Activated T-helper 1 cell treated with anti-CD3 and anti-CD28 coated beads, Interleukin-12 subunit alpha, Interleukin-12 subunit beta, Interleukin-2, Interleukin-4 antibody, amounts not matched to agents 30 ng/mL and 10 ng/mL and 1 ng/mL, durations not matched to agents 14 hours and 24 hours and 36 hours (primary cell): ENCODE measurements at regions of chr7 and their contacts with region 1.

Region 1: DNA sequence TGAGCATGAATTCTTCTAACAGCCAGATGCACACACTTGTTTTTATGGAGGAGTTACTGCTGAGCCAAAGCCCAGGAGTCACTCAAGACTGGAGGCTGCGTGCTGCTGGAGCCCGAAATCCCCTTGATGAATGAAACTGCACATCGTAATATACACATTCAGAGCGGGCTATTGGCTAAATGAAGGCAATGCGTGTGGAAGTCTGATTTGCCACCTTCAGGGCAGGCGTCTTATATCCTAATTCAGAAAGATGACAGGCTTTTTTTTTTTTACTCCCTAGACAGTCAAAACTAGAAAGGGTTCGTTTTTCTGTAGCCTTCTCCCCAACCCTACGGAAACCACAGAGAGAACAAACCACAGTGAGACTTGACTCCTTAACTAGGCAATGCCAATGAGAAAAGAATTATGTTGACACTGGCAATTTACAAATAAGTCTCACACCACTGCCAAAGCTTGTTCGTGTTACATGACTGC is 227.2 kb upstream of the KLF14 start:
- DNase-seq: peak; percentile 83
- H3K4me3 Mint-ChIP-seq: peak overlapping the region; percentile 92
- H3K27ac Mint-ChIP-seq: peak overlapping the region; percentile 98
- H3K4me1 Mint-ChIP-seq: peaks cover 29% of the 10 kb centered on the region
- H3K27me3 Mint-ChIP-seq: no peaks in the 10 kb centered on the region

Region 2: DNA sequence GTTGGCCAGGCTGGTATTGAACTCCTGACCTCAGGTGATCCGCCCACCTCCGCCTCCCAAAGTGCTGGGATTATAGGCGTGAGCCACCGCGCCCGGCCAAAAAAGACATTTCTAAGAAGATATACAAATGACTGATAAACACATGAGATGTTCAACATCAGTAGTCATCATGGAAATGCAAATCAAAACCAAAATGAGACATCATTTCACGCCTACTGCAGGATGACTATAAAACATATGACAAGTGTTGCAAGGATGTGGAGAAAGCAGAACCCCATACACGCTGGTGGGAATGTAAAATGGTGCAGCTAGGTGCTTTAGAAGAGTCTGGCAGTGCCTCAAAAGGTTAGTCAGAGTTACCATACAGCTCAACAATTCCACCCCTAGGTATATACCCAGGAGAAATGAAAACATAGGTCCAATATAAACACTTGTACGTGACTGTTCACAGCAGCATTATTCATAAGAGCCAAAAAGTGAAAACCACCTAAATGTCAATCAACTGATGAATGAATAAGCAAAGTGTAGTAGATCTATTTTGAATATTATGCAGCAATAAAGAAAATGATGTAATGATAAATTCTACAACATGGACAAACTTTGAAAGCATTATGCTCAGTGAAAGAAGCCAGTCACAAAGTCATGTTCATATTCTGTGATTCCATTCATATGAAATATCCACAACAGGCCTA is 780.4 kb before region 1 on chr7:
- intact Hi-C with region 1: loop called (anchors 1 kb)
- DNase-seq: no peak
- H3K4me3 Mint-ChIP-seq: peak overlapping the region; percentile 15
- H3K27ac Mint-ChIP-seq: peak overlapping the region; percentile 92
- H3K4me1 Mint-ChIP-seq: peaks cover 36% of the 10 kb centered on the region
- H3K27me3 Mint-ChIP-seq: no peaks in the 10 kb centered on the region

Region 3: GRCh38 chr7:130912862-130913631 is 48.1 kb before region 1 on chr7:
- intact Hi-C with region 1: loop called (anchors 1 kb)
- DNase-seq: peak; percentile 79
- H3K4me3 Mint-ChIP-seq: peak overlapping the region; percentile 77
- H3K27ac Mint-ChIP-seq: peak overlapping the region; percentile 92
- H3K4me1 Mint-ChIP-seq: peaks cover 93% of the 10 kb centered on the region
- H3K27me3 Mint-ChIP-seq: no peaks in the 10 kb centered on the region

Region 4: DNA sequence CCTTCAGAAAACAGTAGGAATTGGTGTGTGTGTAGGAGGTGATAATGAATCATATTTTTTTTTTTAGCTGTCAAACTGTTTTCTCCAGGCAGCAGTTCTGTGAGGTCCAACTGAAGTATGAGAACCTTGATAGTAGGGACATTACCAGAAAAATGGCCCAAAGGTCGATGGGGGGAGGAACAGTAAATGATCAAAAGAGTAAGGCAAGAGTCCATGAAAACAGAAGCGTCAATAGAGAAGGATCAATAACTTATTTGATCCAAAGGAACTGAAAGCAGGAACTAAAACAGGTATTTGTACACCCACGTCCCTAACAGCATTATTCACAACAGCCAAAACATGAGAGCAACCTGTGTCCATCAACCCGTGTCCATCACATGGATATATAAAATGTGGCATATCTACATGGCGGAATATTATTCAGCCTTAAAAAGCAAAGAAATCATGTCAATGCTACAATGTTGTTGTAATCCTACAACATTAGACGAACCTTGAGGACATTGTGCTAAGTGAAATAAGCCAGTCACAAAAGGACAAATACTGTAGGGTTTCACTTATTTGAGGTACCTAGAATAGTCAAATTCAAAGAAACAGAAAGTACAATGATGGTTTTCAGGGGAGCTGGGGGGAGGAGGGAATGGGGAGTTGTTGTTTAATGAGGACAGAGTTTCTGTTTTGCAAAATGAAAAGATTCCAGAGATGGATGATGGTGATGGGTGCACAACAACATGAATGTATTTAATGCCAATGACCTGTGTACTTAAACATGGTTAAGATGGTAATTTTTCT is 13.2 kb before region 1 on chr7:
- intact Hi-C with region 1: loop called (anchors 1 kb)
- DNase-seq: no peak
- H3K4me3 Mint-ChIP-seq: peak overlapping the region; percentile 64
- H3K27ac Mint-ChIP-seq: peak overlapping the region; percentile 85
- H3K4me1 Mint-ChIP-seq: peaks cover 54% of the 10 kb centered on the region
- H3K27me3 Mint-ChIP-seq: no peaks in the 10 kb centered on the region

Region 5: GRCh38 chr7:131040467-131040932 is 79.3 kb after region 1 on chr7:
- intact Hi-C with region 1: loop called (anchors 1 kb)
- DNase-seq: peak; percentile 34
- H3K4me3 Mint-ChIP-seq: no peak overlapping the region
- H3K27ac Mint-ChIP-seq: no peak overlapping the region
- H3K4me1 Mint-ChIP-seq: peaks cover 24% of the 10 kb centered on the region
- H3K27me3 Mint-ChIP-seq: no peaks in the 10 kb centered on the region

Region 6: DNA sequence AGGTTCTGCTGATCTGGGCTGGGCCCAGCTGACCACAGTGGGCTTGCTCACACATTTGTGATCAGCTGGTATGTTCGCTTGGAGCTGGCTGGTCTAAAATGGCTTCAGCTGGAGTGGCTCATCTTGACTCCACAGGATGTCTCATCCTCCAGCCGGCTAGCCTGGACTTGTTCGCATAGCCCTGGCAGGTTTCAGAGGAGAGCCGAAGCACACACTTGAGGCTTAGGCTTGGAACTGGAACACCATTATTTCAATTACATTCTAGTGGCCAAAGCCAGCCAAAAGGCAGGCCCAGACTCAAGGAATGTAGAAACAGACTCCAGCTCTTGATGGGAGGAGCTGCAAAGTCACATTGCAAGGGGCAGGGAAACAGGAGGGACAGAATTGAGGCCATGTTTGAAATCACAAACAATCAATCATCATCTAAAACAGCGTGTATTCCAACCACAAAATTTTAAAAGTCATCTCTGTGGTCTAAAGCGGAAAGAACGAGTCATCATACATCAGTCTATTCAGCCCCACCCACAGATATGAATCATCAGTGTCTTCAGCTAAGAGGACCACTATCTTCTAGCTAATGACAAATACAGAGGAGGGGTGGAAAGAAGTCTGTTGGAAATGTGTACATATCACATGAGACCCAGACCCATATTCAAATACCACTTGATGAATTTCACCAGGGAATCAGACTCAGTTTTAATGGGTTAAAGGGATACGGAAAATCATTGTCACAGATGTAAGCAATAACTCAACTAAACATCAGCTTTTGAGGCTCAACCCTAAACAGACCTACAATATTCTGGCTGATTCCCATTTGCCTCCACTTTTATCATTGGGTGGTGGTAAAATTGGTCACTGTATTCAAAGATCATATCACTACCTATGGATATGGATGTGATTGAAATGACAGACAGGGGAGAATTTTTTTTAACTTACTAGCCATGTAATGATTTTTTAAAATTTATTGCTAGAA is 227.5 kb after region 1 on chr7:
- intact Hi-C with region 1: loop called (anchors 1 kb)
- DNase-seq: peak; percentile 59
- H3K4me3 Mint-ChIP-seq: peak overlapping the region; percentile 52
- H3K27ac Mint-ChIP-seq: peak overlapping the region; percentile 91
- H3K4me1 Mint-ChIP-seq: peaks cover 59% of the 10 kb centered on the region
- H3K27me3 Mint-ChIP-seq: no peaks in the 10 kb centered on the region